ENCODE measurements at regions of chr6 and their contacts with region 1.

Region 1: GRCh38 chr6:30483677-30484279 is 5.5 kb upstream of the HLA-E start:
- H3K4me3 ChIP-seq: no peak overlapping the region
- H3K27ac ChIP-seq: no peak overlapping the region
- H3K4me1 ChIP-seq: no peaks in the 10 kb centered on the region
- CTCF ChIP-seq: peak; percentile 33; the same call in 1 of the 2 replicates

Region 2: GRCh38 chr6:30500421-30501355 is 16.9 kb after region 1 on chr6:
- CTCF ChIA-PET with region 1: interaction called, 16 read pairs
- POLR2A ChIA-PET with region 1: no interaction called
- H3K4me3 ChIP-seq: no peak overlapping the region
- H3K27ac ChIP-seq: no peak overlapping the region
- H3K4me1 ChIP-seq: no peaks in the 10 kb centered on the region
- CTCF ChIP-seq: no peak

Region 3: GRCh38 chr6:30548375-30548774 is 64.6 kb after region 1 on chr6:
- CTCF ChIA-PET with region 1: interaction called, 324 read pairs
- POLR2A ChIA-PET with region 1: interaction called, 6 read pairs
- H3K4me3 ChIP-seq: no peak overlapping the region
- H3K27ac ChIP-seq: no peak overlapping the region
- H3K4me1 ChIP-seq: no peaks in the 10 kb centered on the region
- CTCF ChIP-seq: no peak

Region 4: GRCh38 chr6:30590994-30591393 is 107.2 kb after region 1 on chr6:
- CTCF ChIA-PET with region 1: interaction called, 55 read pairs
- POLR2A ChIA-PET with region 1: no interaction called
- H3K4me3 ChIP-seq: no peak overlapping the region
- H3K27ac ChIP-seq: no peak overlapping the region
- H3K4me1 ChIP-seq: no peaks in the 10 kb centered on the region
- CTCF ChIP-seq: no peak

Measured in HEK293 (cell line).